Colonic mucosa (tissue), 4 donors: ENCODE measurements at regions of chr1 and their contacts with region 1.

Region 1: DNA sequence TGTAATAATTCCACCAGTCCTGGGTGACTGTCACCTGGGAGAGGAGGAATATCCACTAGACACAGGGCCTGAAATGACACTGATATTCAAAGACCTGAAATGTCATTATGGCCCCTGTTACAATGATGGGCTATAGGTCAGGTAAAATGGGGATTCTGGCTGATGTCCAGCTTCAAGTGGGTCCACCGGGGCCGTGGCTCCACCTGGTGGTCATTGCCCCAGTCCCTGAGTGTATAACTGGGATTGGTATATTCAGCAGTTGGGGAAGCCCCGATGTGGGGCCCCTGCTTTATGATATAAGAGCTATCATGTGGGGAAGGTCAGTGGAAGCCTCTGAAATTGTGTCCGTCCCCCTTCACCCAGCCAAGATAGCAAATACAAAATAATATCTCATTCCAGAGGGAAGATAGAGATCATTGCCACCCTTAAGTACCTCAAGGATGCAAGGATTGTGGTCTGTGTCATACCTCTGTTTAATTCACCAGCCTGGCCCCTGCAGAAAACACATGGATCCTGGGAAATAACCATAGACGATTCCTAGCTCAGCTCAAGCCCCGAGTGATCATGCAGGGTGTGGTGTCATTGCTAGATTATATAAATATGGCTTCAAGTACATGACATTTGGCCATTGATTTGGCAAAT is 19.4 kb downstream of the PLEKHO1 start:
- DNase-seq: peak; percentile 62
- H3K4me3 ChIP-seq: no peak overlapping the region
- H3K27ac ChIP-seq: no peak overlapping the region
- H3K4me1 ChIP-seq: no peaks in the 10 kb centered on the region
- H3K27me3 ChIP-seq: no peaks in the 10 kb centered on the region
- CTCF ChIP-seq: peak; percentile 58

Region 2: DNA sequence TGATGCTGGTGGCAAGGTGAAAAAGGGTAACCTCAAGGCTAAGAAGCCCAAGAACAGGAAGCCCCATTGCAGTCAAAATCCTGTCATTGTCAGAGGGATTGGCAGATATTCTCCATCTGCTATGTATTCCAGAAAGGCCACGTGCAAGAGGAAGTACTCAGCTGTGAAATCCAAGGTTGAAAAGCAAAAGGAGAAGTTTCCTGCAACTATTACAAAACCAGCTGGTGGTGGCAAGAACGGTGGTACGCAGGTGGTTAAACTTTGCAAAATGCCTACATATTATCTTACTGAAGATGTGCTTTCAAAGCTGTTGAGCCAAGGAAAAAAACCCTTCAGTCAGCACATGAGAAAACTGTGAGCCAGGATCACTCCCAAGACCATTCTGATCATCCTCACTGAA is 115.2 kb before region 1 on chr1:
- intact Hi-C with region 1: no loop called
- DNase-seq: no peak
- H3K4me3 ChIP-seq: no peak overlapping the region
- H3K27ac ChIP-seq: no peak overlapping the region
- H3K4me1 ChIP-seq: no peaks in the 10 kb centered on the region
- H3K27me3 ChIP-seq: no peaks in the 10 kb centered on the region
- CTCF ChIP-seq: no peak

Region 3: DNA sequence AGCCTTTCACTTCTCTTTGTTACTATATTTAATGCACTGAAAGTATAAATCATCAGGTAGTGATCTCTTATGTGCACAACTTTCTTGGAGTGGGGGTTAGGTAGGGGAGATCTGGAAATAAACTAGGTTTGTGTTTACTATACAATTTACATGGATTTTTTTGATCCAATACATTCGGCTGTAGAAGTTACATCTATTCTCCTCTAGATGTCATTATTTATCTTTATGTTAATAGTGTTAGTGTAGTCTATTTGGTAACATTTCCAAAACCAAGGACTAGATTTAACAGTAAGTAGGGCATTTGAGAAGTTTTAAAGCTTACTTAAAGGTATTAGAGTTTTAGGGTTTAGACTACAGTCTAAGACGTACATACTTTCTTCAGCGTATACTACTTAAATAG is 96.1 kb before region 1 on chr1:
- intact Hi-C with region 1: loop called (anchors 2 kb)
- DNase-seq: no peak
- H3K4me3 ChIP-seq: no peak overlapping the region
- H3K27ac ChIP-seq: no peak overlapping the region
- H3K4me1 ChIP-seq: no peaks in the 10 kb centered on the region
- H3K27me3 ChIP-seq: no peaks in the 10 kb centered on the region
- CTCF ChIP-seq: peak; percentile 17

Region 4: DNA sequence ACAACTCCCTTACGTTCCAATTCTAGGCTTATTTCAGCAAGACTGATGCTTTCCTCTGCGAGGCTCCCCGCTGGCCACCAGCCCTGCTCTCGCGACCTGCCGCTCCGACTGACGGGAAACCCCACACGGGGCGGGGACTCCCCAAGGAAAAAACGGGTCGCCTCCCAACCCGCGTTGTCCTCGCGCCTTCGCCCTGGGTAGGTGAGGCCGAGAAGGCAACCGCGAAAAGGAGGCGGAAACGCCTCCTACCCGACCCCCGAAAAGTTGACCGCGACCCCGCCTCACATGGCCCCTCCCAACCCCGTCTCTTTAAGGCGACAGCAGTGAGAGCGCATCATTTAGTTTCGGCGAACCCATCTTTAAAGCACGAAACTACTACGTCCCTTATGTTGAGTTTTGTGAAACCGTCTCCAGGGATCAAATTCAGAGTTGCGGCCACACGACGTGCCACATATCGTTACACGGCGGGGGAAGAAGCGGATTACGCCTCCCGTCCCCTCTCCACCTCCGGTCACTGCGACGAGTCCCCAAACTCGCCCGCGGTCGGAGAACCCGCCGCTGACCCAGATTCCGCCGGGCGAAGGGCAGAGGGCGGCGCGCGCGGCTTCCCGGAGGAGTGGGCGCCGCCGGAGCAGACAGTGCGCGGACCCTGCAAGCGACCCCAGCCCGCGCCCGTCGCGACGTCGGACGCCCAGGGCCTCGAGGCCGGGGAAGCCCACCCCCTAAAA is 65.6 kb after region 1 on chr1:
- intact Hi-C with region 1: no loop called
- DNase-seq: peak; percentile 85
- H3K4me3 ChIP-seq: peak overlapping the region; percentile 85
- H3K27ac ChIP-seq: peak overlapping the region; percentile 93
- H3K4me1 ChIP-seq: no peaks in the 10 kb centered on the region
- H3K27me3 ChIP-seq: no peaks in the 10 kb centered on the region
- CTCF ChIP-seq: no peak